ENCODE measurements at regions of chr2 and their contacts with region 1.

Region 1: GRCh38 chr2:222860740-222861410 is at the start of gene ACSL3:
- DNase-seq: peak; percentile 98 to 100
- H3K4me3 ChIP-seq: peak within 1 kb of the TSS; percentile 99
- H3K4me3 Mint-ChIP-seq: no peak within 1 kb of the TSS
- H3K27ac Mint-ChIP-seq: peak within 1 kb of the TSS; percentile 78
- H3K4me1 ChIP-seq: peaks cover 50% of the 10 kb centered on the region
- H3K4me1 Mint-ChIP-seq: peaks cover 15% of the 10 kb centered on the region
- H3K27me3 ChIP-seq: no peaks in the 10 kb centered on the region; the same call in 1 of the 2 replicates
- H3K27me3 Mint-ChIP-seq: no peaks in the 10 kb centered on the region
- CTCF ChIP-seq: peak in 1 of 2 experiments; percentile 21
- total RNA-seq, gene ACSL3: 181 and 185 TPM in 2 replicates

Region 2: DNA sequence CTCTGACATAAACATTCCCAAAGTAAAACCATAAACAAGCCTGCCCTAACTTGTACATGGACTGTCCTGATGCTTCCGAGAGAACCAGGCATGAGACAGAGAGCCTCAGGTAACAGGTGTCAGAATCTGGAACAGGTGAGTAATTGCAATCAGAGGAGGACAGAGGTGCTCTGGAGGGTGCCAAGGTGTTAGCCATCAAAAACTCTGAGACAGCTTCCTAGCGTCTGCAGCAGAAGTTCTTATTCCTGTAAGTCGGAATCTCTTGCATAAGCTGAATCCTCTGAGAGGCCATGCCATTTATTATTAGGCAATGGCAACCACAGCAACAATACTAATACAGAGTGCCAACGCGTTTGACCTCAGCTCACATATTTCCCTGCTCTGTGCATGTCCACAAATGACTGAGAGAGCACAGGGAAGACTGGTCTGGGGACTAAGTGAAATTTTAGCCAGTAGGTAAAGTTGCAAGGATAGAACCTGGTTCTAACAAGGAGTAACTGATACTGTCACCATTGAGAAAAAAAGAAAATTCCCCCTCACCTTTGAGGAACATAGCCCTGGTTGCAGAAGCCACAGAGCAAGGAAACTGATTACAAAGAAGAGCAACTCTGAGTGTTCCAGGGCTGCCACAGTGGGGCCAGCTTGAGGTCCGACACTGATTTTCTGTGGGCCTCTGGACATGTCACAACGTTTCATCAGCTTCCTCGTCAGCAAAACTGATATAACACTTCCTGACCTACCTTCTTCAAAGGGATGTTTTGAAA is 55.2 kb before region 1 on chr2:
- CTCF ChIA-PET with region 1: interaction called, 4 read pairs
- POLR2A ChIA-PET with region 1: no interaction called
- intact Hi-C with region 1: loop called (anchors 2 kb)
- DNase-seq: peak in 1 of 2 experiments; percentile 56
- H3K4me3 ChIP-seq: no peak overlapping the region
- H3K4me3 Mint-ChIP-seq: no peak overlapping the region
- H3K27ac Mint-ChIP-seq: peak overlapping the region; percentile 86
- H3K4me1 ChIP-seq: peaks cover 23% of the 10 kb centered on the region
- H3K4me1 Mint-ChIP-seq: peaks cover 24% of the 10 kb centered on the region
- H3K27me3 ChIP-seq: no peaks in the 10 kb centered on the region
- H3K27me3 Mint-ChIP-seq: no peaks in the 10 kb centered on the region
- CTCF ChIP-seq: no peak

Region 3: DNA sequence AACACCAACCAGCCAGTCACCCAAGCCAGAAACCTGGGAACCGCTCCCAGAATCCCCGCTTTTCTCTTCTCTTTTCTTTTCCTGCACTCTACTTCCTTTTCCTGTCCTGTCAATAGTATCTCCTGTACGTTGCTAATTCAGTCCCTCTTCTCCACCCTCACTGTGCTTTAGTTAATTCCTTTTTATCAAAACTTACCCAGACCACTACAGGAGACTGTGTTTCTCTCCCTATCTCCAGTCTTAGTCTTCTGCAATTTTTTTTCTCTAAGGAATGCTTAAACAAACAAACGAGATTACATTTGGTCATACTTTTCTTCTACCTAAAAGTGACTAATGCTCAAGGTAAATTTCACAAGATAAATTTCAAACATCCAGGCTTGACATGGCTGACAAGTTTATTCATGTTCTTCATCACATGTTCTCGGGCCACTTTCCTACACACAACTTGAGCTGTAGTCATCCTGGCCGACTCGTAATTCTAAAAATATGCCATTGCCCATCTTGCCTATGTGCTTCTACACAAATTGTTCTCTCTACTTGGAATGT is 23.3 kb before region 1 on chr2:
- CTCF ChIA-PET with region 1: no interaction called
- POLR2A ChIA-PET with region 1: interaction called, 3 read pairs
- intact Hi-C with region 1: loop called (anchors 1 kb)
- DNase-seq: peak; percentile 52 to 60
- H3K4me3 ChIP-seq: no peak overlapping the region
- H3K4me3 Mint-ChIP-seq: peak overlapping the region; percentile 59
- H3K27ac Mint-ChIP-seq: peak overlapping the region; percentile 88
- H3K4me1 ChIP-seq: peaks cover 56% of the 10 kb centered on the region
- H3K4me1 Mint-ChIP-seq: peaks cover 15% of the 10 kb centered on the region
- H3K27me3 ChIP-seq: no peaks in the 10 kb centered on the region
- H3K27me3 Mint-ChIP-seq: no peaks in the 10 kb centered on the region
- CTCF ChIP-seq: no peak

Region 4: DNA sequence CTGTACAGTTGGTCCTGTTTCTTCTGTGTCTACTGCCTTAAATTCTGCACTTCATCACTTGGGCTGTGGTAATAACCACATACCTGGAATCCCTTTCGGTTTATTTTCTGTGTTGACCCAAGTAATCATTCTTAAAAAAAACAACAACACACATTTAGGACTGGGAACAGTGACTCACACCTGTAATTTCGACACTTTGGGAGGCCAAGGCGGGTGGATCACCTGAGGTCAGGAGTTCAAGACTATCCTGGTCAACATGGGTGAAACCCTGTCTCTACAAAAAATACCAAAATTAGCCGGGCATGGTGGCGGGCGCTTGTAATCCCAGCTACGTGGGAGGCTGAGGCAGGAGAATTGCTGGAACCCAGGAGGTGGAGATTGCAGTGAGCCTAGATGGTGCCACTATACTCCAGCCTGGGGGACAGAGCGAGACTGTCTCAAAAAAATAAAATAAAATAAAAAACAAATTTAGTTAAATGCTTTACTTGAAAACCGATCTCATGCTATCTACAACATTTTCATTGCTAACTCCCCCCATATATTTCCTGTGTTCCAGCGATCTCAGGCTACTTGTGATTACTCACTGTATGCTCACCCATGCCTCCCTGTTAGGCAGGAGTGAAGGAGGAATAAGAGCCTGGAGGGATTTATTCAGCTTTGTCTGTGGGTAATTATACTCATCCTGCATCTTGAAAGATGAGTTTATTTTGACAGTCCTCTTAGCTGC is 18.2 kb after region 1 on chr2:
- CTCF ChIA-PET with region 1: interaction called, 3 read pairs
- POLR2A ChIA-PET with region 1: interaction called, 4 read pairs
- intact Hi-C with region 1: loop called (anchors 1 kb)
- DNase-seq: peak in 1 of 2 experiments; percentile 46
- H3K4me3 ChIP-seq: no peak overlapping the region
- H3K4me3 Mint-ChIP-seq: no peak overlapping the region
- H3K27ac Mint-ChIP-seq: peak overlapping the region; percentile 3
- H3K4me1 ChIP-seq: peaks cover 41% of the 10 kb centered on the region
- H3K4me1 Mint-ChIP-seq: peaks cover 30% of the 10 kb centered on the region
- H3K27me3 ChIP-seq: no peaks in the 10 kb centered on the region
- H3K27me3 Mint-ChIP-seq: no peaks in the 10 kb centered on the region
- CTCF ChIP-seq: no peak

Region 5: DNA sequence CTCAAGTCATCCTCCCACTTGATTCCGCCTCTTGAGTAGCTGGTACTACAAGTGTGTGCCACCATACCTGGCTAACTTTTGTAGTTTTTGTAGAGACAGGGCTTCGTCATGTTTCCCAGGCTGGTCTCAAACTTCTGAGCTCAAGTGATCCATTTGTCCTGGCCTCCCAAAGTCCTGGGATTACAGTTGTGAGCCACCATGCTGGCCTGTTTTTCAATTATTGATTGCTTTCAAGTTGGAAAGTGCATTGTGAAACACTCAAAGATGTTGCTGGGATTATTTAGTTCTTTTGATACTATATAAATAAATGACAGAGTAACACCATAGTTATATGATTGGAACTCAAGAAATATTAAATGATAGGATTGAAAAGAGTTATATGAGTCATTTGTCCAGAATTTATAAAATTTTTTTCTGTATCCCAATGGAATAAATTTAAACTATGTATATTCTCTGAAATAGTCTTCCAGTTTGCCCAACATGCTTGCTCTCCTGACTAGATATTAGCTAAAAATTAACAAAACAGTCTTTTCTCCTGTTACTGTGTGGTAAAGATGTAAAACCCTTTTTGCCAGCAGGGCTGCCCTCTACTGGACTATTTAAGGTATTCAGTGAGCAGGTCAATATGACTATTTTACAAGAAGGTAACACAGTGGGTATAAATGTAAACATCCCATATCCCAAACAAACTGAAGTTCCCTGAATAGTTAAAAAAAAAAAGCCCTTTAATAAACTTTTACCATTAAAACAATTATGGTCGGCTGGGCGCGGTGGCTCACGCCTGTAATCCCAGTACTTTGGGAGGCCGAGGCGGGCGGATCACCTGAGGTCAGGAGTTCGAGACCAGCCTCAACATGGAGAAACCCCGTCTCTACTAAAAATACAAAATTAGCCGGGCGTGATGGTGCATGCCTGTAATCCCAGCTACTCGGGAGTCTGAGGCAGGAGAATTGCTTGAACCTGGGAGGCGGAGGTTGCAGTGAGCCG is 42.7 kb after region 1 on chr2:
- CTCF ChIA-PET with region 1: interaction called, 19 read pairs
- POLR2A ChIA-PET with region 1: no interaction called
- intact Hi-C with region 1: loop called (anchors 1 kb)
- DNase-seq: peak; percentile 67 to 75
- H3K4me3 ChIP-seq: no peak overlapping the region
- H3K4me3 Mint-ChIP-seq: no peak overlapping the region
- H3K27ac Mint-ChIP-seq: no peak overlapping the region
- H3K4me1 ChIP-seq: peaks cover 44% of the 10 kb centered on the region
- H3K4me1 Mint-ChIP-seq: peaks cover 72% of the 10 kb centered on the region
- H3K27me3 ChIP-seq: no peaks in the 10 kb centered on the region
- H3K27me3 Mint-ChIP-seq: no peaks in the 10 kb centered on the region
- CTCF ChIP-seq: peak; percentile 86 to 87